Common myeloid progenitor, CD34-positive (primary cell): ENCODE measurements at regions of chr11 and their contacts with region 1.

Region 1: DNA sequence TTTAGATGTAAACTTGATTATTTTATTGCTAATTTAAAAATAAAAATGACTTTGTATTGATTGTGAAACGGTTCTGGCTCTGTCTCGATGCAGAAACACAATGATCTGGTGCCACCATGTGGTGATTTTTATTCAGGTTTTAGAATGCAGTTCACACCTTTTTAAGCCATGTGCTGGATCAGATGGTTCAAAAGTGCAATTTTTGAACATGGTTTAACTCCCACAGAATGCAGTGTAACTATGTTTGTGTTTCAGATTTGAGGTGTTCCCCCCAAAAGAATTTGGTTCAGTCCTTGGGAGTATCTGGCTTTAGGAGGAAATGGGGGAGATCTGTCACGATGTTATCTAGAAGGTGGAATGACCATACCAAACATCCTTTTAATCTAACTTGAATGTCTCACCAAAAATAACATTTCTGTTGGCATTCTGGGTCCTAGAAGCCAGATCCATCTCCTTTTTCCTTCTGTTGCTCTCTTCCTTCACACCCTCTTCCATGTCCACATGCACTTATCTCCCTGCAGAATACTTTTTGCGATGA is 7.9 kb downstream of the MRPL16 start:
- DNase-seq: peak; percentile 66 to 75 (median 75)
- H3K4me3 ChIP-seq: no peak overlapping the region
- H3K27ac ChIP-seq: no peak overlapping the region
- H3K4me1 ChIP-seq: peaks cover 6 to 33% (median 26%) of the 10 kb centered on the region in 4 experiments
- H3K27me3 ChIP-seq: no peaks in the 10 kb centered on the region

Region 2: GRCh38 chr11:59767225-59767611 is 35.5 kb before region 1 on chr11:
- CTCF ChIA-PET with region 1: interaction called, 21 read pairs
- POLR2A ChIA-PET with region 1: interaction called, 3 read pairs
- DNase-seq: peak; percentile 54 to 88 (median 82)
- H3K4me3 ChIP-seq: peak overlapping the region in 2 of 7 experiments; percentile 20 to 42
- H3K27ac ChIP-seq: no peak overlapping the region
- H3K4me1 ChIP-seq: peaks cover 25 to 68% (median 33%) of the 10 kb centered on the region in 4 experiments
- H3K27me3 ChIP-seq: no peaks in the 10 kb centered on the region

Region 3: DNA sequence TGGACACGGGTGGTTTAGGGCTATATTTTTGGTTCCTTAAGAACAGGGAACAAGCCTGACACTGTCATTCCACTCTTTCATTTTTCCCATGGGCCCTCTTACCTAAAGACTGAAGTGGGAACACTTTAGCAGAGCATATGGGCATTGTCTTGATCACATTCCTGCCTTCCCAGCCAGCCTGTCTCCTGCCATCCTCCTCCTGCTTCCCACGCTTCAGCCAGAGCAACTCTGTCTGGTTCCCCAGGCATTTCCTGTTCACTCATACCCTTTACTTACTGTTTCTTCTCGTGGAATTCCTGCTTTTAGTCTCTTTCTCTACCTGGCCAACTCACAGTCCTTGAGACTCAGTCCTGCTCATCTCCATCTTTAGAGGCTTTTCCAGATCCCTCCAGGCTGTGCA is 14.9 kb before region 1 on chr11:
- CTCF ChIA-PET with region 1: interaction called, 14 read pairs
- POLR2A ChIA-PET with region 1: no interaction called
- DNase-seq: no peak
- H3K4me3 ChIP-seq: no peak overlapping the region
- H3K27ac ChIP-seq: no peak overlapping the region
- H3K4me1 ChIP-seq: peaks cover 0 to 17% (median 0%) of the 10 kb centered on the region in 4 experiments
- H3K27me3 ChIP-seq: no peaks in the 10 kb centered on the region

Region 4: GRCh38 chr11:59833602-59834001 is 30.9 kb after region 1 on chr11:
- CTCF ChIA-PET with region 1: no interaction called
- POLR2A ChIA-PET with region 1: no interaction called
- DNase-seq: peak in 2 of 3 donors; percentile 45
- H3K4me3 ChIP-seq: no peak overlapping the region
- H3K27ac ChIP-seq: no peak overlapping the region
- H3K4me1 ChIP-seq: peaks cover 0 to 6% (median 0%) of the 10 kb centered on the region in 4 experiments
- H3K27me3 ChIP-seq: no peaks in the 10 kb centered on the region

Region 5: DNA sequence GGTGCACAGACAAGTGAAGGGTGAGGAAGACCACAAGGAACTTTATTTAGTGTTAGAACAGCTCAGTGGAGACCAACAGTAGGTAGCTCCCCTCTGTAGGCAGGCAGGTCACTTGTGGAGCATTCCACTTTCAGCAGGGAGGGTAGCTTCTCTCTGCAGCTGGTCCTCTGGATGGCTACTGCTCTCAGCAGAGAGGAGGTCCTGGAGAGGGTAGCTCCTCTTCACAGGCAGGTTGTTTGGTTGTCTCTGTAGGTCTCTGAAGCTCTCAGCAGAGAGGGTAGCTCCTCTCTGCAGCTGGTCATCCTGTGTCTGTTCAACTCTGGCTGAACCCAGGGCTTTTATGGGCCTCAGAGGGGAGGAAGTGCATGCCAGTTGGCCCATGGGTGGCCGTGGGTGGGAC is 129.0 kb after region 1 on chr11:
- CTCF ChIA-PET with region 1: no interaction called
- POLR2A ChIA-PET with region 1: no interaction called
- DNase-seq: no peak
- H3K4me3 ChIP-seq: no peak overlapping the region
- H3K27ac ChIP-seq: no peak overlapping the region
- H3K4me1 ChIP-seq: no peaks in the 10 kb centered on the region
- H3K27me3 ChIP-seq: no peaks in the 10 kb centered on the region